PC-9 (cell line): ENCODE measurements at regions of chr4 and their contacts with region 1.

Region 1: GRCh38 chr4:55736605-55737183 is 82.9 kb upstream of the EXOC1L start:
- DNase-seq: no peak
- H3K4me3 ChIP-seq: no peak overlapping the region
- H3K27ac ChIP-seq: no peak overlapping the region
- H3K4me1 ChIP-seq: peaks cover 19% of the 10 kb centered on the region
- H3K27me3 ChIP-seq: no peaks in the 10 kb centered on the region
- CTCF ChIP-seq: peak; percentile 70

Region 2: DNA sequence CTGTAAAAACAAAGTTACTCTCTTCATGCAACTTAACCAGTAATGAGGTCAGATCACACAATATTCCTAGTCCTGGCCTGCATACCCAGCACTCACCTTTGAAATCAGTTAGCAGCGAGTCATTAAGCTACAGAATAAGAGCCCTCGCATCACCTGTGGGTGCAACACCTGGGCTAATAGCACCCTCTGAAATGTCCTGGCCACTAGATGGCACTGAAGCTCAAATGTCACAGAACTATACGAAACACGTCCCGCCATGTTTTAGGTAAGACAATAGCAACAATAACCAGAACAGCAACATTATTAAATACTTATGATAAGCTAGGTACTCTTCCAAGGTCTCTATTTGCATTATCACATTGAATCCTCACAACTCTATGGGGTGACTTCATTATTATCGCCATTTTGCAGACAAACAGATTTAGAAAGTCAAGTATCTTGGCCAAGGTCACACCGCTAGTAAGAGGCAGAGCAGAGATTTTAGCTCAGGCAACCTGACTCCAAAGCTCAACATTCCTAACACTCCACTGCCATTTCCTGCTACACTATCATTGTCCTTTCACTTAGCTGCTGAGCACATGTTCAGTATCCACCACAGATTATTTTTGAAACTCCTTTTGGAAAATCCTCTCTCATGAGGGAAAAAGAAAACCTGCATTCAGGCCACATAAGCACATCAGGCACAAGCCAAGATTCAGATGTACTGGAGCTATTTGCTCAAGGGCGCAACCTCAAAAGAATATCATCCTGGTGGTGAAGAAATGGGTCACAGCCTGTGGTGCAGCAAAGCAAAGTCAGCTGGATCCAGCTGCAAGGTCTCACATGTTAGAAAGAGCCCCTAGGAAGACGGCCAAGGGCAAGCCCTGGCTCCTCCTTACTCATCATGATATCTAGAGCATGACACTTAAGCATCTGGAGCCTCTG is 551.8 kb before region 1 on chr4:
- CTCF ChIA-PET with region 1: interaction called, 5 read pairs
- POLR2A ChIA-PET with region 1: no interaction called
- intact Hi-C with region 1: loop called (anchors 10 kb)
- DNase-seq: peak in 1 of 2 experiments; percentile 43
- H3K4me3 ChIP-seq: no peak overlapping the region
- H3K27ac ChIP-seq: peak overlapping the region; percentile 67
- H3K4me1 ChIP-seq: peaks cover 18% of the 10 kb centered on the region
- H3K27me3 ChIP-seq: no peaks in the 10 kb centered on the region
- CTCF ChIP-seq: peak; percentile 36

Region 3: DNA sequence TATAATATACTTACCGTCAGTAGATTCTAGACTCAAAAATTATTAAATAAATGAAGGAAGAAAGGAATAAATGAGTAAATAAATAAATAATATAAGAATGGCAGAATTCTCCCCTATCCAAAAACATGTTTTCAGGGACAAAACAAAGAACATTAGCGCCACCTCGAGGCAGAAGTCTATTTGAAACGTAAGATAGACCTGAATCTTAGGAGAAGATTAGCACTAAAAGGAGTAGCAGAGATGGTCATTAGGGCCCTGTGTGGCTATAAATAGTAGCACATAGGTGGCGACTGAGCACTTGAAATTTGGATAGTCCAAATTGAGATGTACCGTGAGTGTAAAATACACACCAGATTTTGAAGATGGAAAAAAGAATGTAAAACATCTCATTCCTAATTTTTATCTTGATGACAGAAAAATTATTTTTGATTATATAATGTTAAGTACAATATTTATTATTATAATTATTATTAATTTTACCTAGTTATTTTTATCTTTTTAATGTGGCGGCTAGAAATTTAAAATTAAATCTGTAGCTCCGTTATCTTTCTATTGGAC is 414.9 kb before region 1 on chr4:
- CTCF ChIA-PET with region 1: no interaction called
- POLR2A ChIA-PET with region 1: no interaction called
- intact Hi-C with region 1: loop called (anchors 5 kb)
- DNase-seq: peak; percentile 55 to 60
- H3K4me3 ChIP-seq: no peak overlapping the region
- H3K27ac ChIP-seq: no peak overlapping the region
- H3K4me1 ChIP-seq: peaks cover 7% of the 10 kb centered on the region
- H3K27me3 ChIP-seq: no peaks in the 10 kb centered on the region
- CTCF ChIP-seq: peak; percentile 77

Region 4: GRCh38 chr4:55635741-55636655 is 100.7 kb before region 1 on chr4 and contains the start of gene NMU:
- CTCF ChIA-PET with region 1: interaction called, 5 read pairs
- POLR2A ChIA-PET with region 1: interaction called, 10 read pairs
- intact Hi-C with region 1: loop called (anchors 2 kb)
- DNase-seq: peak; percentile 45 to 74
- H3K4me3 ChIP-seq: peak within 1 kb of the TSS; percentile 66
- H3K27ac ChIP-seq: no peak within 1 kb of the TSS
- H3K4me1 ChIP-seq: 0 out of 2 replicates have a peak, but pooled peaks cover 9% of the 10 kb centered on the region
- H3K27me3 ChIP-seq: no peaks in the 10 kb centered on the region
- CTCF ChIP-seq: no peak
- total RNA-seq, gene NMU: 22.6 and 31.3 TPM in 2 replicates

Region 5: GRCh38 chr4:55866973-55867574 is 130.4 kb after region 1 on chr4:
- CTCF ChIA-PET with region 1: no interaction called
- POLR2A ChIA-PET with region 1: no interaction called
- intact Hi-C with region 1: loop called (anchors 2 kb)
- DNase-seq: peak in 1 of 2 experiments; percentile 59
- H3K4me3 ChIP-seq: no peak overlapping the region
- H3K27ac ChIP-seq: peak overlapping the region; percentile 76
- H3K4me1 ChIP-seq: peaks cover 27% of the 10 kb centered on the region
- H3K27me3 ChIP-seq: no peaks in the 10 kb centered on the region
- CTCF ChIP-seq: peak; percentile 80